ENCODE measurements at regions of chr11 and their contacts with region 1.

Region 1: GRCh38 chr11:93908689-93909088 is 58.3 kb upstream of the VSTM5 start:
- DNase-seq: peak; percentile 93
- ATAC-seq: peak; percentile 64
- H3K4me3 ChIP-seq: no peak overlapping the region
- H3K27ac ChIP-seq: peak overlapping the region; percentile 72
- H3K4me1 ChIP-seq: peaks cover 47% of the 10 kb centered on the region
- H3K27me3 ChIP-seq: no peaks in the 10 kb centered on the region
- CTCF ChIP-seq: no peak

Region 2: GRCh38 chr11:93842461-93842860 is 66.2 kb before region 1 on chr11:
- CTCF ChIA-PET with region 1: no interaction called
- POLR2A ChIA-PET with region 1: no interaction called
- intact Hi-C with region 1: loop called (anchors 1 kb)
- DNase-seq: peak; percentile 99
- ATAC-seq: peak; percentile 84
- H3K4me3 ChIP-seq: no peak overlapping the region
- H3K27ac ChIP-seq: peak overlapping the region; percentile 63
- H3K4me1 ChIP-seq: peaks cover 47% of the 10 kb centered on the region
- H3K27me3 ChIP-seq: no peaks in the 10 kb centered on the region
- CTCF ChIP-seq: no peak

Region 3: DNA sequence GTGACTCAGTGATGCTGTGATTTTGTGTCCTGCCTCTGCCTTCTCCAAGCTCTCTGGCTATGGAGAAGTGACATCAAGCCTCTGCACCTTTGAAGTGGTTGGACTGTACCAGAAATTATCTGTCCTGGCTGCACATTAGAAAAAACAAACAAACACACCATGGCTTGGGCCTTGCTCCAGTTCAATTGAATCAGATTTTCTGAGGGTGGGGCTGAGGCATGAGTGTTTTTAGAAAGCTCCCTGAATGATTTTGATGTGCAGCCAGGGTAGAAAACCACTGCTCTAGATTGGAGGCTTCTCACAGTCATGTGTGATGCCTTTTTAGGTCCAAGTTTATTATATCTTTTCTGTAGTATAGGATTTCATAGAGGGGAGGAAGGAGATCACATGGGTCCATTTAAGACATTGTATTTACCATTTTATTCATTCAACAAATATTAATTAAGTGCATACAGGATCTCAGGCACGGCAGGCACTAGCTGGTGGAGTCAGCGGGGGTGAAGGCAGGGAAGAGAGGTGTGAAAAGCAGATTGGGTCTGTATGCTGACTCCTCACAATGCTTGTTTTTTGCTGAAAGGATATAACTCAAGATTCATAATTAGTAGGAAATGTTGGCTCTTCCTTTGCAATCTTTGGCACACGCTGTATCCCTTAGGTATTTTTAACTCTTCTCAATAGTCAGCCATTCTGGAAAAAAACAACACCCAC is 51.1 kb before region 1 on chr11:
- CTCF ChIA-PET with region 1: no interaction called
- POLR2A ChIA-PET with region 1: no interaction called
- intact Hi-C with region 1: loop called (anchors 1 kb)
- DNase-seq: peak; percentile 22
- ATAC-seq: peak; percentile 83
- H3K4me3 ChIP-seq: no peak overlapping the region
- H3K27ac ChIP-seq: no peak overlapping the region
- H3K4me1 ChIP-seq: peaks cover 4% of the 10 kb centered on the region; the same call in 1 of the 2 replicates
- H3K27me3 ChIP-seq: no peaks in the 10 kb centered on the region
- CTCF ChIP-seq: no peak

Measured in PC-3 (cell line).